ENCODE measurements at regions of chr9 and their contacts with region 1.

Region 1: DNA sequence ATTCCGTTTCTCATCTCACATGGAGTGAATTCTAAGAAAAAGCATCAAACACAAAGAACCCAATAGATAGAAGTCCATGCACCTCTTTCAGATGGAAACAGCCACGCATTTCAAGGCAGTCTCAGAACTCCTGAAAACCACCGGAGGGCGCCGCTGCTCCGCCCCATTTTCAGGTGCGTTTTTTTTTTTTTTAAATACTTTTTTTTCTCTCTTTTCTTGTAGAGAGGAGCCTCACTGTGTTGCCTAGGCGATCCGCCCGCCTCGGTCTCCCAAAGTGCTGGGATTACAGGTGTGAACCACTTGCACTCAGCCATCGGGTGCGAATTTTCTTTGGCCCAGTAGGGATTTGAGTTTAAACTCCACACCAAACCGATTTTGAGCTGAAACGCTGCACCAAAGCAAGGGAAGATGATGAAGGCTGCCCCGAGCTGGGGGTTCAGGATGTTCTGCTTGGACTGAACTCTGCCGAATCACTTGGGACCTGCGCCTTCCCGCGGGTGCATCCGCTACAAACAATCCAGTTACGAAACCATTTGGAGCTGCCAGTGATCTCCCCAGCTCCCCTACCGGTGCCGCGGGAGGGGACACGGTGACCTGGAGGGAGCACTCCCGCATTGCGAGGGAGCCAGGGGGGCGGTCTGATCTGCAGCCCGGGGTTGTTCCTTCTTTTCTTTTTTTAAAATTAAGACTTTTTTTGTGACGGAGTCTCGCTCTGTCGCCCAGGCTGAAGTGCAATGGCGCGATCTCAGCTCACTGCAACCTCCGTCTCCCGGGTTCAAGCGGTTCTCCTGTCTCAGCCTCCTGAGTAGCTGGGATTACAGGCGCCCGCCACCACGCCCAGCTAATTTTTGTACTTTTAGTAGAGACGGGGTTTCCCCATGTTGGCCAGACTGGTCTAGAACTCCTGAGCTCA is 1.4 kb downstream of the PTGR1 start:
- DNase-seq: peak; percentile 61 to 72 (median 65)
- H3K4me3 ChIP-seq: peak overlapping the region; percentile 47 to 59
- H3K4me3 Mint-ChIP-seq: peak overlapping the region; percentile 88 to 96 (median 92)
- H3K27ac ChIP-seq: no peak overlapping the region
- H3K27ac Mint-ChIP-seq: peak overlapping the region in 6 of 7 donors; percentile 41 to 81 (median 66)
- H3K4me1 ChIP-seq: peaks cover 21% of the 10 kb centered on the region
- H3K4me1 Mint-ChIP-seq: peaks cover 9 to 29% (median 17%) of the 10 kb centered on the region in 4 donors
- H3K27me3 ChIP-seq: peaks cover 8% of the 10 kb centered on the region
- H3K27me3 Mint-ChIP-seq: peaks cover 19 to 22% of the 10 kb centered on the region in 2 donors

Region 2: DNA sequence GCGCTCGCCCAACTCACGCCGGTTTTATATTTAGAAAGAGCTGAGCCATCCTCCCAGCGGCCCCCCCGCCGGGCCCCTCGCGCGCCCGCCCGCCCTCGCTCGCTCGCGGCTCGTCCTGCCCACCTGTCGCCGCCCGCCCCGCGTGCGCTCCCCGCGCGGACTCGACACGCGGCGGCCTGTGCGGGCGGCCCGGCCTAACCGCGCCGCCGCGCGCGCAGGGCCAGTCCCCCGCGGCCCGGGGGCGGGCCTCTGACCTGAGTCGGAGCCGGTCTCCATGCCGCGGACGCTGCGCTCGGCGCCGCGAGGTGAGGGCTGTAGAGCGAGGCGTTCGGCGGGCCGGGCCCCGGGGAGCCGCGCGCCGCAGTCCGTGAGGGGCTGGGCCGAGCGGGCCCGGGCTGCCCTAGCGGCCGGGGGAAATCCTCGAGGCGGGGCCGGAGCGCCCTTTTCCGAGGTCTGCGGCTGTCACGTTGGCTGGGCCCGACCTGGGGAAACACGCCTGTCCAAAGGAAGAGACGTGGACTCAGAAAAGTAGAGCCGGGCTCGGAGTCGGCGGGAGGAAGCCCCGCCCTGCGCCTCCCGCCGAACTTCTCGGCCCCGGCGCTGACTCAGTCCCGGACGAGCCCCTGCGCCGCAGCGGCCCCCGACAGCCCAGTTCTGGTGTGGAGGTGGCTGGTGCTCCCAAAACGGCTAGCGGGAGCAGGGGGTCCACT is 114.1 kb before region 1 on chr9 and contains the start of gene ECPAS:
- CTCF ChIA-PET with region 1: no interaction called
- POLR2A ChIA-PET with region 1: no interaction called
- intact Hi-C with region 1: loop called (anchors 10 kb)
- DNase-seq: peak; percentile 66 to 72 (median 71)
- H3K4me3 ChIP-seq: peak within 1 kb of the TSS; percentile 69 to 89
- H3K4me3 Mint-ChIP-seq: peak within 1 kb of the TSS; percentile 81 to 90 (median 86)
- H3K27ac ChIP-seq: peak within 1 kb of the TSS; percentile 83
- H3K27ac Mint-ChIP-seq: peak within 1 kb of the TSS; percentile 86 to 93 (median 89)
- H3K4me1 ChIP-seq: peaks cover 11% of the 10 kb centered on the region
- H3K4me1 Mint-ChIP-seq: peaks cover 23 to 37% (median 28%) of the 10 kb centered on the region in 4 donors
- H3K27me3 ChIP-seq: no peaks in the 10 kb centered on the region
- H3K27me3 Mint-ChIP-seq: no peaks in the 10 kb centered on the region
- total RNA-seq, gene ECPAS: 77.6 to 80.3 TPM

Region 3: DNA sequence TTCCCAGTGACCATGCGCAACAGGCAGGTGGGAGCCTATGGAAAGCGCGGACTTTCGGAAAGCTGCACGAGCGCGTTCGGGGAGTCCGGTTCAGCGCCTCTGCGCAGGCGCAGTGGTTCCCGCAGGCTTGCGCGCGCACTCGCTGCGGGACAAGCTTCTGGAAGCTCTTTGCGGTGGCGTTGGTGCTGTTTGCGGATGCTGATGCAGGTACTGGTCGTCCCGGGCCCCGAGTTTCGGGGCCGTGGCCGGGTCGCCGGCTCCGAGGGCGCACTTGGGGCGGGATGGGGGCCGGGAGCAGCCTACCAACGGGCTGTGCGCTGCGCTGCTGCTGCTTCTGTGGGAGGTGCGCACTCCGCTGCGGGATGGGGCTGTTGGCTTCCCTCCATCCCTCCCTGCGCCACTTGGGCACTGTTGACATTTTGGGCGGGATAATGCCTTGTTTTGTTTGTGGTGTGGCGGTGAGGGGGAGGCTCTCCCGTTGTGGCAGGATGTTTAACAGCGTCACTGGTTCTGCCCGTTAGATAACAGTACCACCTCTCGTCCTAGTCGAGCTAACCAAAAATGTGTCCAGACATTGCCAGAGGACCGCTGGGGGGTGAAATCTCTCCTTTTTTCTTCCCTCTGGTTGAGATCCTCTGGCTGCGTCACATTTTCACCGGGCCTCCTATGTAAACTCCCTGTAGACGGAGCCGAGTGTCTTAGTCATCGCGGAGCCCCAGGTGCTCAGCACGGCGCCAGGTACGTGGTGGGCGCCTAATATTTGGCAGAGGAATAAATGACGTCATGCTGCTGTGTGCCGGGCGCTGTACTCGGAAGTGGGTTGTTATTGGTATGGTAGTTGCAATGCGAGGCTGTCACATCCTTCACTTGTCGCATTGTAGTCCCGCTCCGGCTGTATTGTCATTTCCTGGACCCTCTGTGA is 72.8 kb before region 1 on chr9 and contains the start of gene ZNF483:
- CTCF ChIA-PET with region 1: no interaction called
- POLR2A ChIA-PET with region 1: no interaction called
- intact Hi-C with region 1: loop called (anchors 10 kb)
- DNase-seq: peak; percentile 71 to 95 (median 79)
- H3K4me3 ChIP-seq: peak within 1 kb of the TSS; percentile 54 to 87
- H3K4me3 Mint-ChIP-seq: peak within 1 kb of the TSS; percentile 95 to 99 (median 96)
- H3K27ac ChIP-seq: peak within 1 kb of the TSS; percentile 74
- H3K27ac Mint-ChIP-seq: peak within 1 kb of the TSS; percentile 95 to 100 (median 98)
- H3K4me1 ChIP-seq: peaks cover 9% of the 10 kb centered on the region
- H3K4me1 Mint-ChIP-seq: peaks cover 21 to 27% (median 21%) of the 10 kb centered on the region in 4 donors
- H3K27me3 ChIP-seq: no peaks in the 10 kb centered on the region
- H3K27me3 Mint-ChIP-seq: peaks cover 0 to 6% of the 10 kb centered on the region in 2 donors
- total RNA-seq, gene ZNF483: 17.6 to 22.9 TPM

Region 4: DNA sequence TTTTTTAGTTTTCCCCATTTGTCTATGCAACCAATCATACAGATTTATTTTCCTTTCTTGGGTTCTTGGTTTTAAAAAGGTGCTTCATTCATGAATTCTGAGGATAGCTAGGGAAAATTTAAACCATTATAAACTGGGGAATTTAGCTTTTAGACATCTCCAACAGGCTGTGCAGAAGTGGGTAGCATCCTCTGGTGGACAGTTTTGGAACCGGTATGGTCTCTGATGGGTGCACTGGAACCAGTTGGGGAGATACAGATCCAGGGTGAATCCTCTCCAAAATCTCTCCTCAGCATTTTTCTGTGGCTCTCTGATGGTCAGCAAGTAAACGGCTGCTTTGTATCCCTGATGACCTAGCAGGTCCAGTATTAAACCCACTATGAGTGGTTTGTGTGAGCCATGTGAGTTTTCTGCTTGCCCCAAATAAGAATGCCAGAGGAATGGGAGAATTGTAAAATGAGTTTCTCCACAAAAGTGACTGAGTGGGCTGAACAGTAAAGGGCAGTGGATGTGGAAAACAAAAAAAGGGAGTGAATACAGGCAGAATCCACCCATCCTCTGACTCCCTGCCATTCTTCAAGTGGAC is 23.9 kb after region 1 on chr9:
- CTCF ChIA-PET with region 1: interaction called, 20 read pairs
- POLR2A ChIA-PET with region 1: no interaction called
- intact Hi-C with region 1: loop called (anchors 1 kb)
- DNase-seq: peak in 1 of 5 donors; percentile 26
- H3K4me3 ChIP-seq: no peak overlapping the region
- H3K4me3 Mint-ChIP-seq: no peak overlapping the region
- H3K27ac ChIP-seq: no peak overlapping the region
- H3K27ac Mint-ChIP-seq: no peak overlapping the region
- H3K4me1 ChIP-seq: no peaks in the 10 kb centered on the region
- H3K4me1 Mint-ChIP-seq: no peaks in the 10 kb centered on the region
- H3K27me3 ChIP-seq: no peaks in the 10 kb centered on the region
- H3K27me3 Mint-ChIP-seq: peaks cover 2 to 5% of the 10 kb centered on the region in 2 donors

Region 5: DNA sequence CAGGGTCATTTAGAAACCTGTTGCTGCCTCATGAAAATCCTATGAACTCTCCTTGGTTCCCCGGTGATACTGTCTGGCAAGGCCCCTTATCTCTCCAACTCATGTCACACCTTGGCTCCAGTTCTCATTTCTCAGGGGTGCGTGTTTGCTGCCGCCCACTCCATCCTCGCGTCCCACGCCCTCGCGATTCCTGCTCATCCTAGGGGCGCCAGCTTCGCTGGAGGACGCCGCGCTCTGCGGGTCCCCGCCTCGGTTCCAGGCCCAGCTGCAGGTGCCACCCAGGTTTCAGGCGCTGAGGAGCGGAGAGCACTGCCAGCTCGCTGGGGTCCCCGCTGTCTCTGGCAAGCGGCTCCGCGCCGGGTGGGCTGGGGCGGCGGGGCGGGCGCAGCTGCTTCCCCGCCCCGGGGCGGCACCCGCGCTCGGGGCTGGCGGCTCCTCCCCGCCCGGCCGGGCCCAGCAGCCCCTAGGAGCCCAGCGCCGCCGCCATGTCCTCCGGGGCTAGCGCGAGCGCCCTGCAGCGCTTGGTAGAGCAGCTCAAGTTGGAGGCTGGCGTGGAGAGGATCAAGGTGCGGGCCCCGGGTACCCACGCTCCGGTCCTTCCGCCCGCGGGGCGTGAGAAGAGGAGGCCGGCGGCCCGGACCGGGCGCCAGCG is 63.2 kb after region 1 on chr9 and contains the start of gene GNG10:
- CTCF ChIA-PET with region 1: no interaction called
- POLR2A ChIA-PET with region 1: interaction called, 4 read pairs
- intact Hi-C with region 1: loop called (anchors 2 kb)
- DNase-seq: peak; percentile 66 to 73 (median 71)
- H3K4me3 ChIP-seq: peak within 1 kb of the TSS; percentile 76 to 77
- H3K4me3 Mint-ChIP-seq: peak within 1 kb of the TSS; percentile 91 to 97 (median 94)
- H3K27ac ChIP-seq: peak within 1 kb of the TSS; percentile 65
- H3K27ac Mint-ChIP-seq: peak within 1 kb of the TSS; percentile 68 to 98 (median 94)
- H3K4me1 ChIP-seq: peaks cover 36% of the 10 kb centered on the region
- H3K4me1 Mint-ChIP-seq: peaks cover 21 to 44% (median 31%) of the 10 kb centered on the region in 4 donors
- H3K27me3 ChIP-seq: no peaks in the 10 kb centered on the region
- H3K27me3 Mint-ChIP-seq: no peaks in the 10 kb centered on the region
- total RNA-seq, gene GNG10: 9.8 to 12.4 TPM

Region 6: GRCh38 chr9:111691672-111692329 is 93.7 kb after region 1 on chr9:
- CTCF ChIA-PET with region 1: interaction called, 30 read pairs
- POLR2A ChIA-PET with region 1: no interaction called
- intact Hi-C with region 1: loop called (anchors 1 kb)
- DNase-seq: peak in 4 of 5 donors; percentile 4 to 14 (median 10)
- H3K4me3 ChIP-seq: no peak overlapping the region
- H3K4me3 Mint-ChIP-seq: no peak overlapping the region
- H3K27ac ChIP-seq: no peak overlapping the region
- H3K27ac Mint-ChIP-seq: peak overlapping the region in 1 of 7 donors; percentile 16
- H3K4me1 ChIP-seq: no peaks in the 10 kb centered on the region
- H3K4me1 Mint-ChIP-seq: no peaks in the 10 kb centered on the region
- H3K27me3 ChIP-seq: no peaks in the 10 kb centered on the region
- H3K27me3 Mint-ChIP-seq: no peaks in the 10 kb centered on the region

Region 7: GRCh38 chr9:111873901-111874300 is 275.8 kb after region 1 on chr9:
- CTCF ChIA-PET with region 1: no interaction called
- POLR2A ChIA-PET with region 1: no interaction called
- intact Hi-C with region 1: no loop called
- DNase-seq: no peak
- H3K4me3 ChIP-seq: no peak overlapping the region
- H3K4me3 Mint-ChIP-seq: no peak overlapping the region
- H3K27ac ChIP-seq: no peak overlapping the region
- H3K27ac Mint-ChIP-seq: peak overlapping the region in 1 of 7 donors; percentile 37
- H3K4me1 ChIP-seq: no peaks in the 10 kb centered on the region
- H3K4me1 Mint-ChIP-seq: peaks cover 0 to 11% (median 4%) of the 10 kb centered on the region in 4 donors
- H3K27me3 ChIP-seq: no peaks in the 10 kb centered on the region
- H3K27me3 Mint-ChIP-seq: no peaks in the 10 kb centered on the region